Activated T-helper 1 cell treated with anti-CD3 and anti-CD28 coated beads, Interleukin-12 subunit alpha, Interleukin-12 subunit beta, Interleukin-2, Interleukin-4 antibody, amounts not matched to agents 30 ng/mL and 10 ng/mL and 1 ng/mL, durations not matched to agents 14 hours and 24 hours and 36 hours (primary cell): ENCODE measurements at regions of chr1 and their contacts with region 1.

Region 1: DNA sequence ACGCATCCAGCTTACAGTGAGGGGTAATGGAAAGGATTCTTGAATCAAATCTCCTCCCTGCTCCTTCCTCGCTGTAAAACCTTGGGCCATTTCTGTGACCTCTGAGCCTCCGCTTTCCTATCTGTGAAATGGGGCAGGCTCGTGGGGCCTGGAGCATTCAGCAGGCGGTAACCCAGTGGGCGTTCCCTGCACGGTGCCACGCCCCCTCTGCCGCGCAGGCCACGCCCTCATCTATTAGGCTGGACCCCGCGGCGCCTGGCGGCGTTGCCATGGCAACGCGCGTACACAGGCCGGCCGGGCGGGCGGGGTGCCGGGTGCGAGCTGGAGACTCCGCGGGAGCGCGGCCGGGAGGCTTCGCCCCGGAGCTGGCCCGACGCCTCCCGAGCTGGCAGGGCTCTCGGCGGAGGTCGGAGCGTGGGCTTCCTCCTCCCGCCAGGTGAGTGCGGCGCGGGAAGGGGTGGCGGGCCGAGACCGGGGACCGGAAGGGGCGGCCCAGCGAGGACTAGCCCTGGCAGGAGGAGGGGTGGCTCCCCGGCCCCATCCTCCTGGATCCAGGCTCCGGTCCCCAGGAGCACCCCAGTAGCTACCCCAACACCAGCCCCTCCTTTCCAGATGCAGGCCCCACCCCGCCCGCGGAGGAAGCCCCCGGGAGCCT is at the start of gene FHAD1:
- DNase-seq: no peak
- H3K4me3 Mint-ChIP-seq: peak within 1 kb of the TSS; percentile 56
- H3K27ac Mint-ChIP-seq: peak within 1 kb of the TSS; percentile 63
- H3K4me1 Mint-ChIP-seq: peaks cover 57% of the 10 kb centered on the region
- H3K27me3 Mint-ChIP-seq: peaks cover 64% of the 10 kb centered on the region
- total RNA-seq, gene FHAD1: not detected in 2 replicates

Region 2: GRCh38 chr1:15218287-15219279 is 28.5 kb before region 1 on chr1:
- intact Hi-C with region 1: no loop called
- DNase-seq: no peak
- H3K4me3 Mint-ChIP-seq: no peak overlapping the region
- H3K27ac Mint-ChIP-seq: no peak overlapping the region
- H3K4me1 Mint-ChIP-seq: peaks cover 5% of the 10 kb centered on the region
- H3K27me3 Mint-ChIP-seq: peaks cover 30% of the 10 kb centered on the region

Region 3: DNA sequence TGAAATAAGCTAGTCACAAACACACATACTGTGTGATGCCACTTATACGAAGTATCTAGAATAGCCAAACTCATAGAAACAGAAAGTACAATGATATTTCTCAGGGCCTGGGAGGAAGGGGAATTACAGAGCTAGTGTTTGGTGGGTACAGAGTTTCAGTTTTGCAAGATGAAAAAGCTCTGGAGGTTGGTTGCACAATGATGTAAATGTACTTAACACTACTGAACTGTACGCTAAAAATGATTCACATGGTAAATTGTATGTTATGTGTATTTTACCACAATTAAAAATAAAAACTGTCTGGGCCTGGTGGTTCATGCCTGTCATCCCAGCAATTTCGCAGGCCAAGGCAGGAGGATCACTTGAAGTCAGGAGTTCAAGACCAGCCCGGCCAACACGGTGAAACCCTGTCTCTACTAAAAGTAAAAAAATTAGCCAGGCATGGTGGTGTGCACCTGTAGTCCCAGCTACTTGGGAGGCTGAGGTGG is 15.3 kb before region 1 on chr1:
- intact Hi-C with region 1: loop called (anchors 1 kb)
- DNase-seq: peak; percentile 15
- H3K4me3 Mint-ChIP-seq: peak overlapping the region; percentile 1
- H3K27ac Mint-ChIP-seq: no peak overlapping the region
- H3K4me1 Mint-ChIP-seq: peaks cover 17% of the 10 kb centered on the region
- H3K27me3 Mint-ChIP-seq: peaks cover 25% of the 10 kb centered on the region

Region 4: GRCh38 chr1:15261155-15262002 is 14.3 kb after region 1 on chr1:
- intact Hi-C with region 1: no loop called
- DNase-seq: no peak
- H3K4me3 Mint-ChIP-seq: peak overlapping the region; percentile 21
- H3K27ac Mint-ChIP-seq: no peak overlapping the region
- H3K4me1 Mint-ChIP-seq: peaks cover 16% of the 10 kb centered on the region
- H3K27me3 Mint-ChIP-seq: peaks cover 49% of the 10 kb centered on the region

Region 5: GRCh38 chr1:15352123-15352957 is 105.3 kb after region 1 on chr1:
- intact Hi-C with region 1: loop called (anchors 5 kb)
- DNase-seq: peak; percentile 22
- H3K4me3 Mint-ChIP-seq: no peak overlapping the region
- H3K27ac Mint-ChIP-seq: peak overlapping the region; percentile 85
- H3K4me1 Mint-ChIP-seq: peaks cover 49% of the 10 kb centered on the region
- H3K27me3 Mint-ChIP-seq: peaks cover 14% of the 10 kb centered on the region